HEK293 (cell line): ENCODE measurements at regions of chr2 and their contacts with region 1.

Region 1: DNA sequence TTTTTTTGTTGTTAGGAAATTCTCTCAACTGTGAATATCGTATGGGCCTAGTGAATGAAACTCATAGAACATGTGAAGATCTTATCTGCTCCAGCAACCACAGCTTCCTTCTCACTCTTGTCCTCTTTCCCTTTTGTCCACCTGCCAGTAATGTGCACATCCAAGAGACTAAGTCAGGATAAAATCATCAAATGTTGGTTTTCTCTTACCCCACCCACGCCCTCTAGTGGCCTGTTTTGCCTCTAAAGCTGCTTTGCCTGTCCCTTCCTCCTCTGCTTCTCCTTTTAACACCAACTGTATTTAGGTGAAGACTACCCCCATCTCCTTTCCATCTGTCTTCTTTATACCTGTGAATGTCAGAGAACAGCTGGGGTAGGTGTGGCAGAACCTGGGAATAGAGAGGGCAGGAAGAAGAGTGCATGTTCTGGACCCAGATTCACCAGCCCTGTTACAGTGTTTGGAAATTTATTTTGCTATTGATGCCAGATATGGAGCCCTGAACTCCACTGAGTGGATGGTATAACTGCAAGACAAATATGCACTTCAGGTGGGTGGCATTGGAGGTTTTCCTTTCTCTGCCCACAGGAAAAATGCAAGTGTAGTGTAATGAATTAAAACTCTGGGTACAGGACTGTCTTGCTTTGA is 8.4 kb upstream of the MGAT5 start:
- H3K4me3 ChIP-seq: no peak overlapping the region
- H3K27ac ChIP-seq: no peak overlapping the region
- H3K4me1 ChIP-seq: no peaks in the 10 kb centered on the region
- CTCF ChIP-seq: peak; percentile 55

Region 2: GRCh38 chr2:134118279-134119116 is 127.0 kb before region 1 on chr2:
- CTCF ChIA-PET with region 1: interaction called, 53 read pairs
- POLR2A ChIA-PET with region 1: interaction called, 3 read pairs
- H3K4me3 ChIP-seq: no peak overlapping the region
- H3K27ac ChIP-seq: no peak overlapping the region
- H3K4me1 ChIP-seq: peaks cover 13% of the 10 kb centered on the region
- CTCF ChIP-seq: peak; percentile 40; the same call in 1 of the 2 replicates

Region 3: DNA sequence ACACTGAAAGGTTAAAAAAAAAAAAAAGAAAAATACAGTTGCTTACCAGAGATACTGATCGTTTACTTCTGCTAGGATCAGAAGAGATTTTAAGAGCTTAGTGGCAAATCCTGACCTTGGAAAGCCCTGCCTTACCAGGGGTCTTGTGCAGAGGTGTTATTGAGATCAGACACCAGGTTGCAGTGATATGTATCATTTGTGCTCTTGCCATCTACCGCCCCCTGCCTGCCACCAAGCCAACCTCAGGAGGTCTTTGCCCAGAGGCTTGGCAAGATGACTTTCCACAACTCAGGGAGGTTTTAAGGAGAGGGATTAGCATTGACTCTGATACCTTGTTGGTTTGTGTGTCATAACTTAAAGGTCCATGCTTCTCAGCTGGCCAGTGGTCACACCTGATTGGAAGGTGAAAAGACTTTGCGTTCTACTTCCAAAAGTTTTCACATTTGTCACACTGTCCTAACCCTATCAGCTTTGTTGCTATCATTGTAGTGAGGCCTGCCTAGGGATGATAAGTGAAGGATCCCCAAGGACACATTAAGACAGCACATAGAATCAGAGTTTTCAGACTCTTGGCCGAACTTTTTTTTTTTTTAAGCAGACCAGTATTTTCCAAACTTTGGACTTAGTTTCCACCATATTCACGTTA is 37.8 kb before region 1 on chr2:
- CTCF ChIA-PET with region 1: interaction called, 12 read pairs
- POLR2A ChIA-PET with region 1: no interaction called
- H3K4me3 ChIP-seq: no peak overlapping the region
- H3K27ac ChIP-seq: no peak overlapping the region
- H3K4me1 ChIP-seq: peaks cover 12% of the 10 kb centered on the region
- CTCF ChIP-seq: peak; percentile 57

Region 4: GRCh38 chr2:134228493-134228903 is 17.0 kb before region 1 on chr2:
- CTCF ChIA-PET with region 1: interaction called, 10 read pairs
- POLR2A ChIA-PET with region 1: no interaction called
- H3K4me3 ChIP-seq: no peak overlapping the region
- H3K27ac ChIP-seq: no peak overlapping the region
- H3K4me1 ChIP-seq: no peaks in the 10 kb centered on the region
- CTCF ChIP-seq: 0 out of 2 replicates have a peak, but pooled peaks have one; percentile 14

Region 5: DNA sequence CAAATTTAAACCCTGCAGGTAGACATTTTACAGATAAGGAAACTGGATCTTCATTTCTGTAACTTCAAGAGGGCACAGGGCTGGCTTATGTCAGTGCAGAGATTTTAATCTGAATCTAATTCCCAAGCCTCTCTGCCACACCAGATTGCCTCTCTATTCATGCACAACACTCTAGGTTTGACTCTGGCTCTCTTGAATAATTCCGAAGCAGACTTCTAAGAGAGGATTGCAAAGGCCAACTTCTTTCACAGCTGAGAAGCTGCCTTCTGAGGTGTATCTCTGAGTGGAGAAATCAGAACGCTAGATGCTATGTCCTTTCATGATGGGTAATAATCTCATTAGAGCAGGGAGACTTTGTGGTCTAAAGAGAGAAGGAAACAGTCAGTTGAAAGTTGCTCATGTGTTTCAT is 11.7 kb before region 1 on chr2:
- CTCF ChIA-PET with region 1: interaction called, 15 read pairs
- POLR2A ChIA-PET with region 1: no interaction called
- H3K4me3 ChIP-seq: no peak overlapping the region
- H3K27ac ChIP-seq: no peak overlapping the region
- H3K4me1 ChIP-seq: no peaks in the 10 kb centered on the region
- CTCF ChIP-seq: no peak

Region 6: DNA sequence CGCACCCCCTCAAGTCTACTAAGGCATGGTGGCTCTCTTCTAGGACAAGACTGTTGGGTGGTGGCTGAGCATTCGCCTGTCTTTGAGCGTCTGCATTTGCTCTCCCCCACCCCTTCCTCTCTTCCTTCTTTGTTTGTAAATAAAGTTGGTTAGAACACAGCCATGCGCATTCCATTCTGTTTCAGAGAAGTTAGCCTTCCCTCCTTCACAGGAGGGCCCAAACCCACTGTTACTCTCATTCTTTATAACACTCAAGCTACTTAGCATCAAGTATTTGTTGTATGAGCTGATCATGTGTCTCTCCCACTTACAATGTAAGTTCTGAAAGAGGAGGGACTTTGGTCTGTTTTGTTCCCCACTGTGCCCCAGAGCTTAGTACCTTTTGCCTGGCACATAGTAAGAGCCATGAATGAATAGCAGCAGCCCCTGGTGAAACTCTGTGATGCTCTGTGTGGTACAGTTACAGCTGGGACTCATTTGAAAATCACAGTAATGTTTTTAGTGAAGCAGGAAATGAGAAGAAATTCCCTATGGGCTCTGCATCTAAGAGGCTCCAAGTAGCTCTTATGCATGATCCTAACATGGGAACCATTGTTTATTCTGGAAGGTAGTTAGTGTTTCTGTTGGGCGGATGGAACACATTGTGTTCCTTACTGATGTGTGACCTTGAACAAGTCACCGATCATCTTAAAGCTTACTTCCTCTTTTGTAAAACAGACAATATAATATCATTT is 16.1 kb after region 1 on chr2:
- CTCF ChIA-PET with region 1: interaction called, 28 read pairs
- POLR2A ChIA-PET with region 1: no interaction called
- H3K4me3 ChIP-seq: no peak overlapping the region
- H3K27ac ChIP-seq: no peak overlapping the region
- H3K4me1 ChIP-seq: no peaks in the 10 kb centered on the region
- CTCF ChIP-seq: no peak

Region 7: DNA sequence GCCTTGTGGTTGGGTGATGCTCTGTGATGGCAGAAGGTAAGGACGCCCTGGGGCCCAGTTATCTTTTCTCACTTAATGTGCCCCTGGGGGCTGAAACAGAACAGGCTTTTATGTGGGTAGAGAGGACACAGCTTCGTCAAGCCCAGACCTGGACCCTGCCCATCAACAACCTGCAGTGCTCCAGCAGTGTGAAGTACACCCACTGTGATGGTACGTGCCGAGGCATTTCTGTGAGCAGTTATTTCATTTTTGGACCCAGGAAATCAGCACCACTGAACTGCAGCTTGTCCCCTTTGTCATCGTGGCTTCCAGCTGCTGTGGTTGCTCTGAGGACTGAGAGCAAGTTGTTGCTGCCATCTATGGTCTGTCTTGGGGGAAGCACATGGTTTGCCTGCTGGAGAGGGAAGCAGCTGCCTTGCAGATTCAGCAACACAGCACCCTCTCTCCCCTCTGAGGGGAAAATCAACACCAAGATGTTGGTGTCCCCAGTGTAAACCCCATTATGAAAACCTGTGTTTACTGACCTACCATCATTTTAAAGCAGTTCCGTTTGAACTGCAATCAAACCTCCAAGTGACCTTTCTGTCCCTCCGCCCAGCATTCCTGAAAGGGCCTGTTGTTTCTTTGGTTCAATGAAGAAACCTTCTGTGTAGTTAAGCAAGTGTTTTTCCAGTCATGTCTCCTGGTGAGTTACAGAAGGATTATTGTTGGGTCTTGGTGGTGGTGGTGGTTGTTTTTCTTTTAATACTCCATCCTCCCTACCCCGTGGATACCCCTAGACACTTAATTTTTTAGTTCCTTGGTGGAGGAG is 166.6 kb after region 1 on chr2:
- CTCF ChIA-PET with region 1: interaction called, 31 read pairs
- POLR2A ChIA-PET with region 1: no interaction called
- H3K4me3 ChIP-seq: no peak overlapping the region
- H3K27ac ChIP-seq: no peak overlapping the region
- H3K4me1 ChIP-seq: peaks cover 13% of the 10 kb centered on the region
- CTCF ChIP-seq: peak; percentile 83